Sigmoid colon (tissue), 7 donors: ENCODE measurements at regions of chr7 and their contacts with region 1.

Region 1: GRCh38 chr7:139133335-139134139 is 24.0 kb upstream of the ZC3HAV1 start:
- DNase-seq: peak; percentile 91
- H3K4me3 ChIP-seq: peak overlapping the region; percentile 35 to 60 (median 52)
- H3K27ac ChIP-seq: peak overlapping the region; percentile 51 to 76 (median 62)
- H3K4me1 ChIP-seq: peaks cover 0 to 17% (median 10%) of the 10 kb centered on the region in 4 donors
- H3K27me3 ChIP-seq: no peaks in the 10 kb centered on the region
- CTCF ChIP-seq: no peak
- EP300 ChIP-seq: no peak
- POLR2A ChIP-seq: no peak

Region 2: DNA sequence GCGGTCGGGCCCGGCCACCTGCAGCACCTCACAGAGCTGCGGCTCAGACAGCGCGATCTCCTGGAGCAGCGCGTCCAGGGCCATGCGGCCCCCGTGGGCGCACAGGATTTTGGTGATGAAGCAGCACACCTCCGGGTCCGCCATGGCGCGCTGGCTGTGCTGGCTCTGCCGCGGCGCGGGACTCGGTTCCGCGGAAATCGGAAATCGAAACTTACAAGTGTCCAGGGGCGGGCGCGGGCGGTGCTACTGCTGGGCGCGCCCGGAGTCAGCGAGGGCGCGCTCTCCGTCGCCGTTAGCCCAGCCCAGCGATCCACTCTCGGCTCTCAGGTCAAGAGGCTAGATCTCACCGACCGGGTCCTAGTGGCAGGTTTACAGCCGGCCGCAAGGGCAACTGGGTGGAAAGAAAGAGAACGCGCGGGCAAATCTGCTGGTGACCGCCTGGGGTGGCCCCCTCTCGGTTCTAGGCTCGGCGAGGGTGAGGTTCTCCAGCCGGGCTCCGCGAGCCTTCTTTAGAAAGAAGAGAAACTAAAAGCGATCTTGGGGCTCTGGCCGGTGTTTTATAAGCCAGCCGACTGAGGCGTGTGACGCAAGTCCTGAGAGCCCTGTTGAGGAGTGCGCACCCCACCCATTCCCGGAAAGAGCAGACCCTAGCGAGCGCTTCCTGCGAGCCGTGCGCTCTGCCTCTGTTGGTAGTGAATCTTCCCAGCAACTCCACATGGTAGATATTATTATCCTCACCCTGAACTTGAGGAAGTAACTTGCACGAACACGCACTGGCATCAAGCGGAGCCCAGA is 24.2 kb before region 1 on chr7 and contains the start of gene ZC3HAV1:
- intact Hi-C with region 1: loop called (anchors 2 kb)
- DNase-seq: peak; percentile 96
- H3K4me3 ChIP-seq: peak within 1 kb of the TSS; percentile 70 to 84 (median 74)
- H3K27ac ChIP-seq: peak within 1 kb of the TSS; percentile 88 to 93 (median 92)
- H3K4me1 ChIP-seq: peaks cover 0 to 33% (median 27%) of the 10 kb centered on the region in 4 donors
- H3K27me3 ChIP-seq: no peaks in the 10 kb centered on the region
- CTCF ChIP-seq: no peak
- EP300 ChIP-seq: no peak
- POLR2A ChIP-seq: peak; percentile 42 to 52
- total RNA-seq, gene ZC3HAV1: 23.4 to 29.1 (median 26.1) TPM

Region 3: GRCh38 chr7:139169801-139170200 is 36.3 kb after region 1 on chr7:
- intact Hi-C with region 1: no loop called
- DNase-seq: no peak
- H3K4me3 ChIP-seq: no peak overlapping the region
- H3K27ac ChIP-seq: no peak overlapping the region
- H3K4me1 ChIP-seq: no peaks in the 10 kb centered on the region
- H3K27me3 ChIP-seq: no peaks in the 10 kb centered on the region
- CTCF ChIP-seq: no peak
- EP300 ChIP-seq: no peak
- POLR2A ChIP-seq: no peak

Region 4: GRCh38 chr7:139180700-139181311 is 47.3 kb after region 1 on chr7:
- intact Hi-C with region 1: no loop called
- DNase-seq: no peak
- H3K4me3 ChIP-seq: no peak overlapping the region
- H3K27ac ChIP-seq: no peak overlapping the region
- H3K4me1 ChIP-seq: no peaks in the 10 kb centered on the region
- H3K27me3 ChIP-seq: no peaks in the 10 kb centered on the region
- CTCF ChIP-seq: no peak
- EP300 ChIP-seq: no peak
- POLR2A ChIP-seq: no peak

Region 5: GRCh38 chr7:139393621-139394211 is 260.2 kb after region 1 on chr7:
- intact Hi-C with region 1: no loop called
- DNase-seq: no peak
- H3K4me3 ChIP-seq: no peak overlapping the region
- H3K27ac ChIP-seq: no peak overlapping the region
- H3K4me1 ChIP-seq: peaks cover 0 to 24% (median 10%) of the 10 kb centered on the region in 4 donors
- H3K27me3 ChIP-seq: no peaks in the 10 kb centered on the region
- CTCF ChIP-seq: no peak
- EP300 ChIP-seq: no peak
- POLR2A ChIP-seq: no peak